ENCODE measurements at regions of chr14 and their contacts with region 1.

Region 1: GRCh38 chr14:77320238-77320935 is at the start of gene POMT2:
- DNase-seq: peak; percentile 91

Region 2: GRCh38 chr14:77301103-77301502 is 19.3 kb before region 1 on chr14:
- CTCF ChIA-PET with region 1: interaction called, 134 read pairs
- POLR2A ChIA-PET with region 1: interaction called, 56 read pairs
- DNase-seq: peak; percentile 77

Region 3: DNA sequence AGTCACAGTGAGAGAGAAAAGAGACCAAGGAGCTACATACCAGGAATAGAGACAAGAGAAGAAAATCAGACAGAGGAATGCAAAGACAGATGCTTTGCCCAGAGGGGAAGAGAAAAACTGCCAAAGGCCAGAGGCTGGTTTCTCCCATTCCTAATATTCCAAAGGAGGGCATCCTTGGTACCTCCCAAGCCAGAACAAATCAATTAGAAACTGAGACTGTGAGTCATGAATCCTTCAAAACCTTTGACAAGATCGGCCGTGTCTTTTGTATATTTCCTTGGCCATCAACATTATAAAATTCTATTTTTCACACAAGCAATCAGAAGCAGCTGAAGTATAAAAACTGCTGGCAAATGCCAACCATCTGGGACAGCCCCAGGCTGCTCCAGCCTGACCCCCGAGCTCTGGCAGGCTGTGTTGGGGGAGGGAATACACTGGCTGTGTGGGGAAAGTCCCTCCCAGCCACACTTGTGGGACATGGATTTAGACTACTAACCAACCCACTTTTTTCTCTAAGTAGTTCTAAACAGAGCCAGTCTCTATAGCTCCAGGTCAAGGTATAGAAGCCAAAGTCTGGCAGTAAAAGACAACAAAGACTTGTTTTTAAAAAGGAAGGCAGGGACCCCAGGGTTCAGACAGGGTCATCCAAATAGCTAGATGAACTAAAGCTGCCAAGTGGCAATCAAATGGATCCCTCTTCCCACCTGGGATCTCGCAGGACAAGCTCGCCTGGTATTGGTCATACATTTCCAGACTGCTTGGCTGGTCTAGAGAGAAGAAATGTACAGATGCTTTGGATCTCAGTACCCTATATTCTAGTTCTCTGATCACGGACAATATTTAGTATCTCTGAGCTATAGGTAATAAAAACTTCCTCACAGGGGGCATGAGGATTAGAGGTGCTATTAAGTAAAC is 13.3 kb before region 1 on chr14:
- CTCF ChIA-PET with region 1: interaction called, 134 read pairs
- POLR2A ChIA-PET with region 1: interaction called, 56 read pairs
- DNase-seq: no peak

Region 4: GRCh38 chr14:77376771-77377501 is 56.5 kb after region 1 on chr14 and contains the starts of genes SAMD15 and TMED8:
- CTCF ChIA-PET with region 1: no interaction called
- POLR2A ChIA-PET with region 1: interaction called, 23 read pairs
- DNase-seq: peak; percentile 94

Region 5: GRCh38 chr14:77457522-77458290 is 137.3 kb after region 1 on chr14 and contains the starts of genes AHSA1 and VIPAS39:
- CTCF ChIA-PET with region 1: interaction called, 5 read pairs
- POLR2A ChIA-PET with region 1: interaction called, 10 read pairs
- DNase-seq: peak; percentile 92

Measured in HEK293T (cell line).